ENCODE measurements at regions of chr4 and their contacts with region 1.

Region 1: DNA sequence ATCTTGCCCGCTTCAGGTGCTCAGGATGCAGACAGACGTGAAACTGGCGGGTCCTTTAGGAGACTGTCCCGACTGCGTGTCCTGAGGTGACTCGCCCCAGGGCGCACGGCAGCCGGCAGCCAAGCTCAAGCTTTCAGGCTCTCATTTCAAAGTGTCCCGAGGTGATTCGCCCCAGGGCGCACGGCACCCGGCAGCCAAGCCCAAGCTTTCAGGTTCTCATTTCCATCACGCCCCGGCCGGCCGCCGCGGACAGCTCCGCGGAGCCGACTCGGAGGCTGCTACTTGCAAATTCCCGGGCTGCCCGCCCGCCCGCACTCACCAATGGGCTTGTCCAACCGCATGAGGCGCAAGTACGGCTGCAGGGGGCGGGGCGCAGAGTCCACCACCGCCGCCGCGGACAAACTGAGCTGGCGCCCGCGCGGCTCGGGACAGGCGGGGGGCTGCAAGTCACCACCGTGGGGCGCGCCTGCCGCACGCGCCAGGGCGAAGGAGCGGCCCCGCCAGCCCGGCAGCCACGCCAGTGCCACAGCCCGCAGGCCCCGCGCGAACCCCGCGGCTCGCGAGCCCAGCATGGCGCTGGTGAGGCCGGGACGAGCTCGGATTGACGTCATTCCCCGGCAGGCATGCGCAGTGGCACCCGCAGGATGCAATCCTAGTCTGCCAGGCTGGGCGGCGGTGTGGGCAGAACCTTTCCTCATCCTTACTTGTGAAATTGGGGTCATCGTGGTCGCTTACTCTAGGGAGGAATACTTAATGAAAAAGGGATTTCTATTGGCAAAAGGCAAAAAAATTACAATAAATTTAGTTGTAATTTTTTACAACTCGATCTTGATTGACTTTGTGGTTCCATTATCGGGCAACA is at the start of gene COQ2:
- DNase-seq: peak; percentile 96
- H3K4me3 Mint-ChIP-seq: peak within 1 kb of the TSS; percentile 85
- H3K27ac Mint-ChIP-seq: peak within 1 kb of the TSS; percentile 89
- H3K4me1 Mint-ChIP-seq: peaks cover 39% of the 10 kb centered on the region
- H3K27me3 Mint-ChIP-seq: no peaks in the 10 kb centered on the region
- total RNA-seq, gene COQ2: 15.9 to 18.7 TPM

Region 2: DNA sequence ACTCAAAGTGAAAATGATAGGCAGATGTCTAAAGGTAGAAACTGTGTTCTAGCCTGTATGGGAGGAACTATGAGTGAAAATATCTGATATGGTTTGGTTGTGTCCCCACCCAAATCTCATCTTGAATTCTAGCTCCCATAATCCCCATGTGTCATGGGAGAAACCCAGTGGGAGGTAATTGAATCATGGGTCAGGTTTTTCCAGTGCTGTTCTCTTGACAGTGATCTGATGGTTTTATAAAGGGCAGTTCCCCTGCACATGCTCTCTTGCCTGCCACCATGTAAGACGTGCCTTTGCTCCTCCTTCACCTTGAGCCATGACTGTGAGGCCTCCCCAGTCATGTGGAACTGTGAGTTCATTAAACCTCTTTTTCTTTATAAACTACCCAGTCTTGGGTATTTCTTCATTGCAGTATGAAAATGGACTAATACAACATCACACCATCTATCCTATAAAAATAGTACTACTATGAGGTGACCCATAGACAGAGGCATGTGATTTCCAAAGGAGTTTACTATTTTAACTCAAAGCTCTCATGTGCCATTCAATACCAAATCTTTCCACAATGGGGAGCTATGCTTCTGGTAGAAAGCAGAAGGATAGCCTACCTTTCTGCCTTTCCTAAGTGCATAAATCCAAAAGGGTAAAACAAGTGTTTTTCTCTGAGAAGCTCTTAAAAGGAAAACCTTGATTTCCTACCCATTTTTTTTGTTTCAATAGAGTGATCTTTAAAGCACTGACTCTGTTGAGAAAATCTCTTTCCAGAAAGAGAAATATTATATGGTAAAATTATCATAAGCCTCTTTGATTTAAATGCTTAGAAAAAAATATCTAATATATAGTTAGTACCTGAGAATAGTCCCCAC is 432.3 kb before region 1 on chr4:
- CTCF ChIA-PET with region 1: interaction called, 16 read pairs
- POLR2A ChIA-PET with region 1: no interaction called
- intact Hi-C with region 1: loop called (anchors 5 kb)
- DNase-seq: no peak
- H3K4me3 Mint-ChIP-seq: no peak overlapping the region
- H3K27ac Mint-ChIP-seq: no peak overlapping the region
- H3K4me1 Mint-ChIP-seq: peaks cover 3% of the 10 kb centered on the region
- H3K27me3 Mint-ChIP-seq: no peaks in the 10 kb centered on the region

Region 3: DNA sequence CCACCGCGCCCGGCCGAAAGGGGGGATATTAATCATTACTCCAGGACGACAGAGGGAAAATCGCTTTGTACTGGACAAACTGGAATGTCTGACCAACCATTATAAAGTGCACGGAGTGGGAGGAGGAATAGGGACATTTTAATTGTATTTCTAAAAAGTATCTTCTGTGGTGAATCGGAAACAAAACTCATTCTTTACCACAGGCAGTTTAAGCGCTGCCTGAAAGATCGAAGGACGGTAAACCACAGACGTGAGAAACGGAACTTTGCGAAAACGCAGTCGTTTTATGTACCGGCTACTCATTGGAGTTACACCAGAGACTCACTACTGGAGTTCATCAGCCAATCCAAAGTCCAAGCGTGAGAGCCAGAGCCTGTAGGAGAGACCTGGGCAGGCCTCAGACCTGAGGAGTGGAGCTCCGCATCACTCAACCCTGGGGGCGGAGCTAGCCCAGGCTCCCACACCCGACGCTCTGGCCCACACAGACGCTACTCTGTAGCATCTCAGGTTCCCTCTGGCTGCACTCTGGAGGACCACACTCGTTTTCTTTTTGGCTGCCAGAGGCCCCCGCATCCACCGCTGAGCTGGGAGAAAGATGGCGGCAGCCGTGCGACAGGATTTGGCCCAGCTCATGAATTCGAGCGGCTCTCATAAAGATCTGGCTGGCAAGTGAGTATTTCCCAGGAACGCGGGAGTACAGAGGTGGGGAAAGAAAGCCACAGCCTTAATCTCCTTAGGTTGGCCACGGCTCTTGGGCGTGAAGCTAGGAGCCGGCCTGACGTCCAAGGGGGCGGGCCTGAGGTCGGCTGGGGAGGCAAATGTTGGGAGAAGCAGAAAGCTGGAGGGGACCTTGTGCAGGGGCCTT is 249.6 kb before region 1 on chr4 and contains the start of gene COPS4:
- CTCF ChIA-PET with region 1: interaction called, 53 read pairs
- POLR2A ChIA-PET with region 1: interaction called, 9 read pairs
- intact Hi-C with region 1: loop called (anchors 1 kb)
- DNase-seq: peak; percentile 97
- H3K4me3 Mint-ChIP-seq: peak within 1 kb of the TSS; percentile 85
- H3K27ac Mint-ChIP-seq: peak within 1 kb of the TSS; percentile 98
- H3K4me1 Mint-ChIP-seq: peaks cover 28% of the 10 kb centered on the region
- H3K27me3 Mint-ChIP-seq: no peaks in the 10 kb centered on the region
- total RNA-seq, gene COPS4: 38.5 to 40.6 TPM

Region 4: GRCh38 chr4:83217721-83218522 is 66.5 kb before region 1 on chr4:
- CTCF ChIA-PET with region 1: interaction called, 13 read pairs
- POLR2A ChIA-PET with region 1: interaction called, 3 read pairs
- intact Hi-C with region 1: loop called (anchors 2 kb)
- DNase-seq: peak; percentile 76
- H3K4me3 Mint-ChIP-seq: peak overlapping the region; percentile 22
- H3K27ac Mint-ChIP-seq: peak overlapping the region; percentile 52
- H3K4me1 Mint-ChIP-seq: peaks cover 60% of the 10 kb centered on the region
- H3K27me3 Mint-ChIP-seq: peaks cover 5% of the 10 kb centered on the region

Region 5: GRCh38 chr4:83267121-83267829 is 17.1 kb before region 1 on chr4:
- CTCF ChIA-PET with region 1: interaction called, 45 read pairs
- POLR2A ChIA-PET with region 1: interaction called, 4 read pairs
- intact Hi-C with region 1: no loop called
- DNase-seq: no peak
- H3K4me3 Mint-ChIP-seq: no peak overlapping the region
- H3K27ac Mint-ChIP-seq: no peak overlapping the region
- H3K4me1 Mint-ChIP-seq: peaks cover 13% of the 10 kb centered on the region
- H3K27me3 Mint-ChIP-seq: no peaks in the 10 kb centered on the region

Region 6: GRCh38 chr4:83455281-83456129 is 171.1 kb after region 1 on chr4 and contains the starts of genes HELQ and MRPS18C:
- CTCF ChIA-PET with region 1: interaction called, 7 read pairs
- POLR2A ChIA-PET with region 1: interaction called, 6 read pairs
- intact Hi-C with region 1: loop called (anchors 1 kb)
- DNase-seq: peak; percentile 98
- H3K4me3 Mint-ChIP-seq: peak within 1 kb of the TSS; percentile 100
- H3K27ac Mint-ChIP-seq: peak within 1 kb of the TSS; percentile 100
- H3K4me1 Mint-ChIP-seq: peaks cover 44% of the 10 kb centered on the region
- H3K27me3 Mint-ChIP-seq: peaks cover 2% of the 10 kb centered on the region
- total RNA-seq, gene HELQ: 9.5 to 13.3 TPM
- total RNA-seq, gene MRPS18C: 63.3 to 72.8 TPM